Heart left ventricle (tissue), 16 donors: ENCODE measurements at regions of chr9 and their contacts with region 1.

Region 1: GRCh38 chr9:79571309-79572031 is at the start of gene TLE4:
- DNase-seq: peak; percentile 100
- ATAC-seq: peak; percentile 96 to 99 (median 98)
- H3K4me3 ChIP-seq: peak within 1 kb of the TSS; percentile 76 to 99 (median 93)
- H3K27ac ChIP-seq: peak within 1 kb of the TSS; percentile 70 to 97 (median 91)
- H3K4me1 ChIP-seq: peaks cover 0 to 47% (median 16%) of the 10 kb centered on the region in 12 donors
- H3K27me3 ChIP-seq: peaks cover 0 to 4% (median 0%) of the 10 kb centered on the region in 9 donors
- CTCF ChIP-seq: no peak
- POLR2A ChIP-seq: peak; percentile 93 to 99
- total RNA-seq, gene TLE4: 8.4 to 23.9 (median 16.7) TPM

Region 2: GRCh38 chr9:79512249-79512648 is 59.2 kb before region 1 on chr9:
- intact Hi-C with region 1: no loop called
- DNase-seq: no peak
- ATAC-seq: no peak
- H3K4me3 ChIP-seq: no peak overlapping the region
- H3K27ac ChIP-seq: no peak overlapping the region
- H3K4me1 ChIP-seq: no peaks in the 10 kb centered on the region
- H3K27me3 ChIP-seq: no peaks in the 10 kb centered on the region
- CTCF ChIP-seq: no peak
- POLR2A ChIP-seq: no peak

Region 3: DNA sequence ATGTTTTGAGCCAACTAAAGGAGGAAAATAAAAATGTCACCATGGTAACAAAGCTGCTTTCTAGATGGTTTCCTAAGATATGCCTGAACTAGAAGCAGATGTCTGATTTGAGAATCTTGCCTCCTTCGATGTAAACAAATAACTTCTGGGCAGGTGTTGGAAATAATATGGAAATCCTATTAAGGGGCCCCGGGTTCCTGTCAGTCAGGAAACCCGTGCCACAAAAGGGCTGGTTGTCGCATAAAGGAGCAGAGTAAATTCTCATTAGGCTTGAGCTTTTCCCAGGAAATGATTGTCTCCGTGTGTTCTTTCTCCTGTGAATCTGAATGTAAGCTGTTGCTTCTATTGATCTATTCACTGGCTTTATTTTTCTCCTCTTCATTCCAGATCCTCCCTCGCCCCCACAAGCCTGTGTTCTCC is 91.1 kb after region 1 on chr9:
- intact Hi-C with region 1: loop called in 6 of 10 experiments (anchors 5 to 10 kb)
- DNase-seq: no peak
- ATAC-seq: peak in 1 of 4 donors; percentile 47
- H3K4me3 ChIP-seq: peak overlapping the region in 1 of 12 donors; percentile 20
- H3K27ac ChIP-seq: peak overlapping the region in 4 of 12 donors; percentile 5 to 49 (median 25)
- H3K4me1 ChIP-seq: peaks cover 0 to 46% (median 17%) of the 10 kb centered on the region in 12 donors
- H3K27me3 ChIP-seq: no peaks in the 10 kb centered on the region
- CTCF ChIP-seq: no peak
- POLR2A ChIP-seq: no peak

Region 4: DNA sequence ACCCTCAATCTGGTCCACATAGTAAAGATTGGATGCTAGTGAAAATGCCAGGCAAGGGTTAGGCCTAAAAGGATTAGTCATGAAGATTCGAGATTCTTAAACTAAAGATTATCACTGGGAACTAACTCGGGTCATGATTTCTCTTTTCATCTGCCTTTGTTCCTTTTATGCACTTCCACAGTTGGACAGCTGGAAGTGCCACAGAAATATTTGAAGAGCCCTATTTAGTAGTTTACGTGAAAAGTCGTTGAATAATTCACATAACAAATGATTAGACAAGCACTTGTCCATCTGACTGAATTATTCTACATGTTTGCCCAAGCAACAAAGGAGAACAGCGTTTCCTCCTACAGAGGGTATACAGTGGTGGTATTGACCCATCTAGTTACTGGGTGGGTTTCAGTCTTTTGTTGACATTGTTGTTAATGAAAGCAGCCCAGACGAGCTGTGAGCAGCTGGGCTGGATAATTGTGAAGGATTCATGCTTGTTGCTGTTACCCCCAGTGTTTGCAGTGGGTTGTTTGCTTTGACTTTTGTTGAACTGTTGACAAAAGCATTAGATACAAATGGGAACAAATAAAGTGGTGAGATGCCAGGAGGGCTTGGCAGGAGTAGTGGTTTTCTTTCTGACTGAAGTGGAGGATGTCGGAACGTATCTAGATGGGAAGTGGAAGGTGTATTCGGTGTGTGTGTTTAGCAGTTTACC is 96.4 kb after region 1 on chr9:
- intact Hi-C with region 1: loop called in 6 of 10 experiments (anchors 5 to 10 kb)
- DNase-seq: no peak
- ATAC-seq: no peak
- H3K4me3 ChIP-seq: no peak overlapping the region
- H3K27ac ChIP-seq: no peak overlapping the region
- H3K4me1 ChIP-seq: peaks cover 0 to 49% (median 24%) of the 10 kb centered on the region in 12 donors
- H3K27me3 ChIP-seq: no peaks in the 10 kb centered on the region
- CTCF ChIP-seq: no peak
- POLR2A ChIP-seq: no peak

Region 5: DNA sequence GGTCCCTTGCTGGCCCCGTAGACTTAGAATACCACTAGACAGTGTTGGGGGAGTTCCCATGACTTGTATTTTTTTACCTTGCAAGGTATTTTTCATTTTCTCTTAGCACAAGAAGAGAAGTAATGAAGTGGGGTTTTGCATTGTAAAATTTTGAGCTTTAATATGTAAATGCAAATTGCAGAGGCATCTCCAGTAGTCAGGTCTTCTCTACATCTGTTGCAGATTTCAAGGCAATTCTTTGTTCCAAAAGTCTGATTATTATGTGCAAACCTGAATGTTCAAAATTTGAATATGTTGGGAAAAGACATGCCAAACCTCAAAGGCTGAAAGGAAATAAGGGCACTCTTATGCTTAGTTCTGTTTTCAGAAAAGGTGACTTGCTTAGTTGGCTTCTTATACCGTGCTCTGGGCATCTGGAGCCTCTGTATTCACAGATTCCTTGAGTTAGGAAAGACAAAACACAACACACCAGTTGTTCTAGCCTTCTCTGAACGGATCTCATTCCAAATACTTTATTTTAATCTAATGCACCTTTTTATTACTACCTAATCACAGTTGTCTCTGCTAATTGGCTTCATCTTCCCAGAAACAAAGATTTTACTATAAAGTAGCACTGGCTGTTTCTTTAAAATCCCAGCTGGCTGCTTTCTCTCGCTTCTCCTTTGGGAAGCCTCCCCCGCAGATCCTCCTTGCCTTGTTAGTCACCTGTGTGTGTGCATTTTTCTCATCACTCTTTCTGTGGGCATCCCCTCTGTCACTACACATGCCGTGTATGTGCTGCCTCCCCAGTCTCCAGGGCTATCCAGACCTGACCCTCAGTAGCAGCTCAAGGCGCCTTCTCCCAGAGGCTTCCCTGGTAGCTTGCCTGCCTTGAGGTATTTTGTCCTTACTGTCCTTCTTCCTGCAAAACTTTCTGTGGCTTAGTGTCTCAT is 138.5 kb after region 1 on chr9:
- intact Hi-C with region 1: loop called in 1 of 10 experiments (anchors 10 kb)
- DNase-seq: no peak
- ATAC-seq: no peak
- H3K4me3 ChIP-seq: no peak overlapping the region
- H3K27ac ChIP-seq: no peak overlapping the region
- H3K4me1 ChIP-seq: no peaks in the 10 kb centered on the region
- H3K27me3 ChIP-seq: no peaks in the 10 kb centered on the region
- CTCF ChIP-seq: no peak
- POLR2A ChIP-seq: no peak

Region 6: DNA sequence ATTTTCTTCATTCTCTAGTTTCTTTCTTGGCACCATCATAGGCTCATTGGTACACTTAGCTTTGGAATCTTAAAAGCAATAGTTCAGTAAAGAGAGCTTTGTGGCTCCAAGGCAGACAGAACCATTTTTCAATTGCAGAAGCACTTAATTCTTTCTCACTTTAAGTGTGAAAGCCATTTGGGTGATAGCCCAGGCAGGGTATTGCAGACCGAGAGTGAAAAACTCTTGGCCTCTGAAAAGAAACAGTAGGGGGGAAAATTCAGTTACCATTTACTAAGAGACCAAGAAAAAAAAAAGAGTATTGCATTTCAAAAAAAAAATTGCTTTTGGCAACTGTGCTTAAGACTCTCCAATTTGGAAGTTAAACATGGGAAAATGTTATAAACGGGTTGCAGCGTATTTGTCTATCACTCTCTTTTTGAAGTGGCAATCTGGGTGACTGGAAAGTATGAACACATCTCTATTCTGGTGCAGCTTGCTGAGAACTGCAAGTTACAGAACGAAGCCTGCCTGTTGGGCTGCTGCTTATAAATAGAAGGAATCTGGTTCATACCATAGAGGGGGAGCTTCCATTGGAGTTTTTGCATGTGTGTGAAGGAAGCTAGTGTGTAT is 170.7 kb after region 1 on chr9:
- intact Hi-C with region 1: loop called in 1 of 10 experiments (anchors 5 kb)
- DNase-seq: peak in 3 of 5 donors; percentile 20 to 35 (median 31)
- ATAC-seq: peak; percentile 93 to 98 (median 97)
- H3K4me3 ChIP-seq: no peak overlapping the region
- H3K27ac ChIP-seq: peak overlapping the region in 11 of 12 donors; percentile 32 to 85 (median 54)
- H3K4me1 ChIP-seq: peaks cover 0 to 16% (median 5%) of the 10 kb centered on the region in 12 donors
- H3K27me3 ChIP-seq: no peaks in the 10 kb centered on the region
- CTCF ChIP-seq: no peak
- POLR2A ChIP-seq: no peak

Region 7: GRCh38 chr9:79799691-79800335 is 228.3 kb after region 1 on chr9:
- intact Hi-C with region 1: loop called in 1 of 10 experiments (anchors 5 kb)
- DNase-seq: peak in 4 of 5 donors; percentile 46 to 71 (median 57)
- ATAC-seq: peak; percentile 88 to 97 (median 94)
- H3K4me3 ChIP-seq: no peak overlapping the region
- H3K27ac ChIP-seq: peak overlapping the region in 1 of 12 donors; percentile 4
- H3K4me1 ChIP-seq: peaks cover 0 to 17% (median 4%) of the 10 kb centered on the region in 12 donors
- H3K27me3 ChIP-seq: no peaks in the 10 kb centered on the region
- CTCF ChIP-seq: no peak
- POLR2A ChIP-seq: no peak